ENCODE measurements at regions of chr17 and their contacts with region 1.

Region 1: DNA sequence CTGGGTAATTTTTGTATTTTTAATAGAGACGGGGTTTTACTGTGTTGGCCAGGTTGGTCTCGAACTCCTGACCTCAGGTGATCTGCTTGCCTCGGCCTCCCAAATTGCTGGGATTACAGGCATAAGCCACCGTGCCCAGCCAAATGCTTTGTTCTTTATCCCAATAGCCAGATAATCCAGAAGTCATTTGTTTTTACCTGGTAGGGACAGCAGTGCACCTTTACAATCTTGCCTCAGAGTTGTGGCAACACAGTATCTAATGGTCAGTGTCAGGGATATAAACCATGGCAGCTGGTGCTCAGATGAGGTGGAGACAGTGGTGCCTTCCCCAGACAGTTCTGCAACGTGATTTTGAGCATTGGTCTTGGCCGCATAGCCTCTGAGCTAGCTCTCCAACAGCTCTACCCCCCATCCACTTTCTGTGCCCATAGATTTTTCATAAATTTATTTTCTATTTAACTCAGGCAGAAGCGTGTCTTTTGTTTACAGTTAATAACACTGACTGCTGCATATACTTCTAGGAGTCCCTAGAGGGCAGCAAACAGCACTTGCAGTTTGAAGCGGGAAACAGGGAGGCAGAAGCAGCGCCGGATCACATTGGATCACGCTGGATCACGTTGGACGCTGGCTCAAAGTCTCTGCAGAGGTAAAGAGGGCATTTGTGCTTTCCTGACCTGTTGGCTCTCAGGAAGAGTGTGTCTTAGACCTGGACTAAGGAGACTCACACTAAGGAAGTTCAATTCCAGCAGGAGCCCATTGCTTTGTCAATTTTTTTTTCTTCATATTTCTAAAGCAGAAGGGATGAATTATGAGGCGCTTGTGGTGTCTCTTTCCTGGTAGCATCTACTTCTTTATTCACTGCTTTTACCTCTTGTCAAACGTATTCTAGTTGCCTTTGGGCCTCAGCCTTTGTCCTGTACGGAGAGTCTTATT is 5.1 kb upstream of the GGT6 start:
- DNase-seq: peak; percentile 62 to 75
- ATAC-seq: peak; percentile 78 to 87
- H3K4me3 ChIP-seq: no peak overlapping the region
- H3K27ac ChIP-seq: peak overlapping the region; percentile 9 to 73 (median 22)
- H3K4me1 ChIP-seq: peaks cover 5 to 8% of the 10 kb centered on the region in 2 donors
- H3K27me3 ChIP-seq: no peaks in the 10 kb centered on the region
- CTCF ChIP-seq: peak; percentile 79 to 88 (median 86)
- POLR2A ChIP-seq: no peak

Region 2: DNA sequence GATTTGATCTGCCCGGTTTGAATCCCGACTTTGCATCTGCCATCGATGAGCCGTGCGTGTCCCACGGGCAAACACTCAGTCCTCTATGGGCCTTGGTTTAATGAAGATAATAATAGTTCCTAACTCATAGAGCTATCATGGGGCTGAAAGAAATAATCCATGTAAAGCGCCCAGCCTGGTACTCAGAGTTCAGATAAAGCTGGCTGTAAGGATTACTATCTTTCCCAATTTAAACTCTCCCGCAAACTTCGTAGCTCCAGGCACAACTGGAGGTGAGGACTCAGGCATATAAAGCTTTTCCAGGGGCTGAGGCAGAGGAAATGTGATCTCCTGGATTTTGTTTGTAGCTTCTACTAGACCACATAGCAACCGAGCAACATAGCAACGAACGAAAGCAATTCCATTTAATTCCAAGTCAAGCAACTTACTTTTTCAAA is 59.7 kb after region 1 on chr17:
- in situ Hi-C with region 1: loop called (anchors 5 kb)
- intact Hi-C with region 1: loop called (anchors 1 kb)
- DNase-seq: peak; percentile 29 to 54
- ATAC-seq: peak; percentile 78 to 92
- H3K4me3 ChIP-seq: peak overlapping the region in 2 of 4 donors; percentile 15 to 32
- H3K27ac ChIP-seq: peak overlapping the region; percentile 85 to 88 (median 85)
- H3K4me1 ChIP-seq: peaks cover 14 to 24% of the 10 kb centered on the region in 2 donors
- H3K27me3 ChIP-seq: no peaks in the 10 kb centered on the region
- CTCF ChIP-seq: no peak
- POLR2A ChIP-seq: peak in 1 of 2 donors; percentile 59

Region 3: DNA sequence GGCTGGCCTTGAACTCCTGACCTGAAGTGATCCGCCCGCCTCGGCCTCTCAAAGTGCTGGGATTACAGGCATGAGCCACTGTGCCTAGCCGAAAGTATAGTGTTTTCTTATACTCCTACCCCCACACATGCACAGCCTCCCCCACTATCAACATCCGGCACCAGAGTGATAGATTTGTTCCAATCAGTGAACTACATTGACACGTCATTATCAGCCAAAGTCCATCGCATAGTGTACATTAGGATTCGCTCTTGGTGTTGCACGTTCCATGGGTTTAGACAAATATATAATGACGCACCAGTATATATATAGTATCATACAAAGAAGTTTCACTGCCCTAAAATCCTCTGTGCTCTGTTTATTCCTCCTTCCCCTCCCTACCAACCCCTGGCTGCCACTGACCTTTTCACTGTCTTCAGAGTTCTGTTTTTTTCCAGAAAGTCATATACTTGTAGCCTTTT is 194.3 kb after region 1 on chr17:
- in situ Hi-C with region 1: no loop called
- intact Hi-C with region 1: no loop called
- DNase-seq: no peak
- ATAC-seq: peak in 1 of 2 donors; percentile 30
- H3K4me3 ChIP-seq: no peak overlapping the region
- H3K27ac ChIP-seq: no peak overlapping the region
- H3K4me1 ChIP-seq: no peaks in the 10 kb centered on the region
- H3K27me3 ChIP-seq: peaks cover 2 to 5% (median 4%) of the 10 kb centered on the region in 3 donors
- CTCF ChIP-seq: no peak
- POLR2A ChIP-seq: no peak